ENCODE measurements at regions of chr9 and their contacts with region 1.

Region 1: GRCh38 chr9:125558453-125559092 is 148.4 kb downstream of the MAPKAP1 start:
- DNase-seq: peak in 4 of 5 donors; percentile 57 to 60 (median 58)
- ATAC-seq: peak in 3 of 4 donors; percentile 65 to 83 (median 82)
- H3K4me3 ChIP-seq: no peak overlapping the region
- H3K27ac ChIP-seq: peak overlapping the region in 3 of 12 donors; percentile 18 to 37 (median 20)
- H3K4me1 ChIP-seq: peaks cover 0 to 26% (median 5%) of the 10 kb centered on the region in 12 donors
- H3K27me3 ChIP-seq: no peaks in the 10 kb centered on the region
- CTCF ChIP-seq: peak; percentile 67 to 86 (median 74)
- POLR2A ChIP-seq: no peak

Region 2: GRCh38 chr9:125521462-125522327 is 36.9 kb before region 1 on chr9:
- intact Hi-C with region 1: no loop called
- DNase-seq: no peak
- ATAC-seq: no peak
- H3K4me3 ChIP-seq: no peak overlapping the region
- H3K27ac ChIP-seq: peak overlapping the region in 3 of 12 donors; percentile 24 to 78 (median 59)
- H3K4me1 ChIP-seq: peaks cover 0 to 50% (median 14%) of the 10 kb centered on the region in 12 donors
- H3K27me3 ChIP-seq: no peaks in the 10 kb centered on the region
- CTCF ChIP-seq: no peak
- POLR2A ChIP-seq: no peak

Region 3: DNA sequence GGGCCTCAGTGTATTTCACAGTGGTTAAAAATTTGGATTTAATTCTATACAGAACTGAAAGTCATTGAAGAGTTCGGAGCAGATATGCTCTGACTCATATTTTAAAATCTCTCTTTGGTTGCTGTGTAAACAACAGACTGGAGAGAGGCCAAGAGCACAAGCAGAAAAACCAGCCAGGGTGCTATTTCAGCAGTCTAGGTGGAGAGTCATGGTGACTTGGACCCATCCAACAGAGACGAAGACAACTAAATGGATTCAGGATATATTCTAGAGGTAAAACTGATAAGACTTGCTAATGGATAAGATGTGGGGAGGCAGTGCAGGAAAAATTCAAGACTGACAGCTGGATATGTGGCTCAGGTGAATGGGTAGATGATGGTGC is 20.5 kb before region 1 on chr9:
- intact Hi-C with region 1: loop called in 1 of 10 experiments (anchors 2 kb)
- DNase-seq: peak in 1 of 5 donors; percentile 47
- ATAC-seq: peak; percentile 55 to 81 (median 60)
- H3K4me3 ChIP-seq: no peak overlapping the region
- H3K27ac ChIP-seq: peak overlapping the region in 9 of 12 donors; percentile 9 to 64 (median 33)
- H3K4me1 ChIP-seq: peaks cover 0 to 68% (median 26%) of the 10 kb centered on the region in 12 donors
- H3K27me3 ChIP-seq: no peaks in the 10 kb centered on the region
- CTCF ChIP-seq: no peak
- POLR2A ChIP-seq: no peak

Region 4: GRCh38 chr9:125631391-125632085 is 73.0 kb after region 1 on chr9:
- intact Hi-C with region 1: loop called in 7 of 10 experiments (anchors 2 to 5 kb)
- DNase-seq: no peak
- ATAC-seq: peak in 3 of 4 donors; percentile 74 to 78 (median 75)
- H3K4me3 ChIP-seq: no peak overlapping the region
- H3K27ac ChIP-seq: peak overlapping the region in 1 of 12 donors; percentile 80
- H3K4me1 ChIP-seq: peaks cover 0 to 75% (median 22%) of the 10 kb centered on the region in 12 donors
- H3K27me3 ChIP-seq: no peaks in the 10 kb centered on the region
- CTCF ChIP-seq: peak; percentile 34 to 69 (median 60)
- POLR2A ChIP-seq: no peak

Region 5: GRCh38 chr9:125758986-125759763 is 200.6 kb after region 1 on chr9:
- intact Hi-C with region 1: loop called in 1 of 10 experiments (anchors 10 kb)
- DNase-seq: peak in 4 of 5 donors; percentile 10 to 33 (median 26)
- ATAC-seq: peak; percentile 30 to 88 (median 63)
- H3K4me3 ChIP-seq: peak overlapping the region in 9 of 12 donors; percentile 16 to 51 (median 30)
- H3K27ac ChIP-seq: peak overlapping the region in 3 of 12 donors; percentile 25 to 64 (median 34)
- H3K4me1 ChIP-seq: peaks cover 5 to 85% (median 47%) of the 10 kb centered on the region in 12 donors
- H3K27me3 ChIP-seq: no peaks in the 10 kb centered on the region
- CTCF ChIP-seq: no peak
- POLR2A ChIP-seq: no peak

Region 6: DNA sequence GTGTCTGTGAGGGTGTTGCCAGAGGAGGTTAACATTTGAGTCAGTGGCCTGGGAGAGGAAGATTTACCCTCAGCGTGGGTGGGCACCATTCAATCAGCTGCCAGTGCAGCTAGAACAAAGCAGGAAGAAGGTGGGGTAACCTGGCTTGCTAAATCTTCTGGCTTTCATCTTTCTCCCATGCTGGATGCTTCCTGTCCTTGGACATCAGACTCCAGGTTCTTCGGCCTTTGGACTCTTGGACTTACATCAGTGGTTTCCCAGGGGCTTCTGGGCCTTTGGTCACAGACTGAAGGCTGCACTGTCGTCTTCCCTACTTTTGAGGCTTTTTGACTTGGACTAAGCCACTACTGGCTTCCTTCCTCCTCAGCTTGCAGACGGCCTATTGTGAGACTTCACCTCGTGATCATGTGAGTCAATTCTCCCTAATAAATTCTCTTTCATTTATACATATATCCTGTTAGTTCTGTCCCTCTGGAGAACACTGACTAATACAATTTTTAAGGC is 226.7 kb after region 1 on chr9:
- intact Hi-C with region 1: no loop called
- DNase-seq: no peak
- ATAC-seq: peak in 1 of 4 donors; percentile 34
- H3K4me3 ChIP-seq: no peak overlapping the region
- H3K27ac ChIP-seq: peak overlapping the region in 1 of 12 donors; percentile 61
- H3K4me1 ChIP-seq: peaks cover 0 to 23% (median 7%) of the 10 kb centered on the region in 12 donors
- H3K27me3 ChIP-seq: no peaks in the 10 kb centered on the region
- CTCF ChIP-seq: no peak
- POLR2A ChIP-seq: no peak

Measured in heart left ventricle (tissue), 16 donors.